ENCODE measurements at regions of chr14 and their contacts with region 1.

Region 1: GRCh38 chr14:102560458-102561154 is 31.8 kb upstream of the RCOR1 start:
- DNase-seq: no peak
- ATAC-seq: 0 out of 3 replicates have a peak, but pooled peaks have one; percentile 2
- H3K4me3 ChIP-seq: no peak overlapping the region
- H3K27ac ChIP-seq: no peak overlapping the region
- H3K4me1 ChIP-seq: peaks cover 0 to 30% of the 10 kb centered on the region in 2 experiments; a peak in 2 of 5 replicates
- H3K27me3 ChIP-seq: no peaks in the 10 kb centered on the region
- CTCF ChIP-seq: no peak
- EP300 ChIP-seq: no peak
- POLR2A ChIP-seq: no peak
- RAD21 ChIP-seq: no peak

Region 2: GRCh38 chr14:102370305-102370809 is 190.2 kb before region 1 on chr14:
- CTCF ChIA-PET with region 1: no interaction called
- POLR2A ChIA-PET with region 1: no interaction called
- in situ Hi-C with region 1: no loop called
- intact Hi-C with region 1: no loop called
- DNase-seq: peak in 1 of 4 experiments; percentile 30
- ATAC-seq: peak; percentile 70
- H3K4me3 ChIP-seq: no peak overlapping the region
- H3K27ac ChIP-seq: no peak overlapping the region
- H3K4me1 ChIP-seq: no peaks in the 10 kb centered on the region; a peak in 1 of 5 replicates
- H3K27me3 ChIP-seq: no peaks in the 10 kb centered on the region
- CTCF ChIP-seq: no peak
- EP300 ChIP-seq: no peak
- POLR2A ChIP-seq: no peak
- RAD21 ChIP-seq: no peak

Region 3: DNA sequence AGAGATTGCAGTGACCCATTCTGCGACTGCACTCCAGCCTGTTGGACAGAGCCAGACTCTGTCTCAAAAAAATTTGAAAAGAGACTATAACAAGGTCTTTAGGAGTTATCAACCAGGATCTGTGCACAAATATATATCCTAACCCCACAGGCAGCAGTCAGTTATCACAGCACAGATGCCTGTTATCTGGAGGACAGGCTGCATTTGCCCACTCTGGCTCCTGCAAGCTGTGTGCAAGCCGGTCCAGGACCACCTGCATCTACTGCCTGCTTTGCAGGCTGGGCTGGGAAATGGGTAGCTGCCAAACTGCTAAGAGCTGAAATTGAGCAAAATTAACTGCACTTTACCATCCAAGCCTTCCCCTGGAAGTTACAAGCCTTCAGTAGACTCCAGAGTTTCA is 10.4 kb after region 1 on chr14:
- CTCF ChIA-PET with region 1: no interaction called
- POLR2A ChIA-PET with region 1: interaction called, 10 read pairs
- in situ Hi-C with region 1: no loop called
- intact Hi-C with region 1: no loop called
- DNase-seq: peak in 1 of 4 experiments; percentile 62
- ATAC-seq: peak; percentile 18
- H3K4me3 ChIP-seq: no peak overlapping the region
- H3K27ac ChIP-seq: peak overlapping the region; percentile 32; the same call in 1 of the 3 replicates
- H3K4me1 ChIP-seq: peaks cover 35 to 40% of the 10 kb centered on the region in 2 experiments
- H3K27me3 ChIP-seq: no peaks in the 10 kb centered on the region
- CTCF ChIP-seq: no peak
- EP300 ChIP-seq: peak; percentile 48; the same call in 1 of the 2 replicates
- POLR2A ChIP-seq: no peak
- RAD21 ChIP-seq: no peak

Region 4: DNA sequence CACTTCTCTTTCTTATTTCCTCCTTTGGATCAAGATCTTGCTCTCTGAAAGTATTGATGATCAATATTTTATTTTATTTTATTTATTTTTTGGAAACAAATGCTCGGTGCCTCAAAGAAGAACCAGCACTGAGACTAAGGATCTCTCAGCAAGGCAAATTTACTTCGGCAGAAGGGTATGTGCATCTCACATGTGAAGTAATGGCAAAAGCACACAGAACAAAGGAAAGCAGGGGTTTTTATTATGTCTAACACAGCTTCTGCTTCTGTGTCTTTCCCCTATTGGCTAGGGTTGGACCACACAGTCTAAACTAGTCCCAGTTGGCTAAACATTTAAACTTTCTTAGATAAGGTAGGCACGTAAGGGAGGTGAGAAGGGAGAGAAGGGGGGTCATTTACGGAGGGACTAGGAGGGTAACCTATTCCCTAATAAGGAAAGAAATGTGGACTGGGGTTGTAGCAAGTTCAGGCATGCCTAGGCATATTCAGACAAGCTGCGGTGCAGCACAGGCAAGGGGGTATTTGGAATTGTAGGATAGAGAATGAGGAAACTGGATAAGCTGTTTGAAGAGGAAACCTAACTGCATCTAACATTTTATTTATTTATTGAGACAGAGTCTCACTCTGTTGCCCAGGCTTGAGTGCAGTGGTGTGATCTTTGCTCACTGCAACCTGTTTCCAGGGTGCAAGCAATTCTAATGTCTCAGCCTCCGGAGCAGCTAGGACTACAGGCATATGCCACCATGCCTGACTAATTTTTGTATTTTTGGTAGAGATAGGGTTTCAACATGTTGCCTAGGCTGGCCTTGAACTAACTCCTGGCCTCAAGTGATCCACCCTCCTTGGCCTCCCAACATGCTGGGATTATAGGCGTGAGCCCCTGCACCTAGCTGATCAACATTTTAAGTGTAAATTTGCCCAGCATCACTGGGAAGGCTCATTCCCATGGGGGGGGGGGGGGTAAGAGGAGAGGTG is 683.4 kb after region 1 on chr14:
- CTCF ChIA-PET with region 1: no interaction called
- POLR2A ChIA-PET with region 1: no interaction called
- in situ Hi-C with region 1: no loop called
- intact Hi-C with region 1: no loop called
- DNase-seq: no peak
- ATAC-seq: no peak
- H3K4me3 ChIP-seq: no peak overlapping the region
- H3K27ac ChIP-seq: no peak overlapping the region
- H3K4me1 ChIP-seq: no peaks in the 10 kb centered on the region; a peak in 1 of 5 replicates
- H3K27me3 ChIP-seq: no peaks in the 10 kb centered on the region
- CTCF ChIP-seq: no peak
- EP300 ChIP-seq: no peak
- POLR2A ChIP-seq: no peak
- RAD21 ChIP-seq: no peak

Measured in K562 (cell line).